Ovary (tissue), 10 donors: ENCODE measurements at regions of chr19 and their contacts with region 1.

Region 1: DNA sequence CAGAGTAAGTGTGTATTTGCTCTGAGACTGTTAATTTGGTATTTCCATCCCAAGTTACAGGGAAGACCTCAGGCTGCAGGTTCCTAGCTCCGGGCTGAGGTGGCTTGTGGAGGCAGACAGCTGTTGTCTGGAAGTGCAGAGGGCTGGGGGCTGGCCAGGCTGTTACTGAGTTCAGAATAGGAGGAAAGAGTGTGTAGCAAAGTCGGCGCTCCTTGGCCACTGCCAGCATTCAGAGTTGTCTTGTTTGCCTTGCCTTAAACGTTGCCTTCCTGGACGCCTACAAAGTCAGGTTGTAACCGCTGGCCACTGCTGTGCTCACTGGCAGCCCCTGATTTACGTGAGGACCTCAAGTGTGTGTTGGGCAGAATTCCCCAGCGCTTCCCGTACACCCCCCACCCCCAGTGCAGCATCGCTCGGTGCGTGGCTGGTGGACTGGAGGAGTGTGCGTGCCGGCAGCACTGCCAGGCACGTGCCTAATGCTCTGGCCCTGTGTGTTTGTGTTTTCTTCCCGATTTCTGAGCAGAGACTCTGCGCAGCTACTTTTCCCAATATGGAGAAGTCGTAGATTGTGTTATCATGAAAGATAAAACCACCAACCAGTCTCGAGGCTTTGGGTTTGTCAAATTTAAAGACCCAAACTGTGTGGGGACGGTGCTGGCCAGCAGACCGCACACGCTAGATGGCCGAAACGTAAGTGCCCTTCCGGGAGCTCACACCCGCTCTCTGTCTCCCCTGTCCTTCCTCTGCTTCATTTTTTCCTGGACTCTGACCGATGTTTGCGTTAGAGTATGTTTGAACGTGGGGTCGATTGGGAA is 10.5 kb downstream of the DAZAP1 start:
- DNase-seq: peak in 3 of 5 donors; percentile 45 to 71 (median 64)
- H3K4me3 ChIP-seq: no peak overlapping the region
- H3K27ac ChIP-seq: peak overlapping the region in 1 of 2 donors; percentile 68
- H3K4me1 ChIP-seq: peaks cover 30% of the 10 kb centered on the region
- H3K27me3 ChIP-seq: no peaks in the 10 kb centered on the region
- CTCF ChIP-seq: no peak
- EP300 ChIP-seq: no peak
- POLR2A ChIP-seq: no peak

Region 2: GRCh38 chr19:1437609-1438008 is 19.7 kb after region 1 on chr19:
- intact Hi-C with region 1: loop called in 1 of 4 experiments (anchors 2 kb)
- DNase-seq: no peak
- H3K4me3 ChIP-seq: no peak overlapping the region
- H3K27ac ChIP-seq: no peak overlapping the region
- H3K4me1 ChIP-seq: peaks cover 6% of the 10 kb centered on the region
- H3K27me3 ChIP-seq: no peaks in the 10 kb centered on the region
- CTCF ChIP-seq: no peak
- EP300 ChIP-seq: no peak
- POLR2A ChIP-seq: no peak